ENCODE measurements at regions of chr9 and their contacts with region 1.

Region 1: GRCh38 chr9:131253891-131254491 is 22.3 kb downstream of the FAM78A start:
- DNase-seq: no peak
- ATAC-seq: no peak
- H3K4me3 Mint-ChIP-seq: peak overlapping the region; percentile 16
- H3K27ac Mint-ChIP-seq: peak overlapping the region; percentile 99
- H3K4me1 Mint-ChIP-seq: peaks cover 47% of the 10 kb centered on the region
- H3K27me3 Mint-ChIP-seq: no peaks in the 10 kb centered on the region

Region 2: GRCh38 chr9:131237931-131238401 is 16.0 kb before region 1 on chr9:
- POLR2A ChIA-PET with region 1: interaction called, 79 read pairs
- DNase-seq: peak; percentile 81
- ATAC-seq: peak; percentile 97
- H3K4me3 Mint-ChIP-seq: peak overlapping the region; percentile 79
- H3K27ac Mint-ChIP-seq: peak overlapping the region; percentile 98
- H3K4me1 Mint-ChIP-seq: peaks cover 38% of the 10 kb centered on the region
- H3K27me3 Mint-ChIP-seq: no peaks in the 10 kb centered on the region

Region 3: DNA sequence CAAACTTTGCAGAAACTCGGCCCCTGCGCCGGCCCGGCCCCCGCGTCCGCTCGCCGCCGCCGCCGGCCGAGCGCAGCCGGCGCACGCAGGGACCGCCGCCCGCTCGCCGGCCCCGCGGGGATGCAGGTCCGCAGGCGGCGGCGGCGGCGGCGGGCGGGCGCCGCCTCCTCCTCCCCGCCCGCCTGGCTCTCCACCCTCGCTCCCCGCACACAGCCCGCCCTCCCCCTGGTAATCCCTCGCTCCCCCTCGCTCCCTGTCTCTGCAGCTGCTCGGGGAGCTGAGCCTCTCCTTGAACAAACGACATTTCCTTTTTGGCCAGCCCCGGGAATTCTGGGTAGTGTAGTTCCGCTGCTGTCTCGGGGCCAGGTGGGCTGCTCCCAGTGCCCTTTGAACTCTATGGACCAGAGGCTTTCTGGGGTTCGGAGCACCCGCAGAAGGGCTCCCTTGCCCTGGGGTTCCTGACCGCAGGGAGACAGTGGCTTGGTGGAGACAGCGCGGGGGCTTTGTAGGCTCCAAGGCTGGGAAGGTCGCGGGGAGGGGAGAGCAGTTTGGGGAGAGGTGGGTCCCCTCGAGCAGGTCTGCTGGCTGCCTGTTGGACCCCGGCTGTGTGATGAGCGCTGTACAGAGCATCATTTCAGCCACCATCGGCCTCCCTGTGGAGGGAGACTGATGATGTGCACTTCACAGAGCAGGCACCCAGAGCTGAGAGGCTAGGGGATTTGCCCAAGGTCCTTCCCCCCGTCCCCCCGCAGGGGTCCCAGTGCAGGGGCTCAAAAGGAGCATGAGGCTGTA is 24.1 kb after region 1 on chr9:
- POLR2A ChIA-PET with region 1: interaction called, 594 read pairs
- DNase-seq: peak; percentile 71
- ATAC-seq: peak; percentile 44
- H3K4me3 Mint-ChIP-seq: peak overlapping the region; percentile 83
- H3K27ac Mint-ChIP-seq: peak overlapping the region; percentile 93
- H3K4me1 Mint-ChIP-seq: peaks cover 23% of the 10 kb centered on the region
- H3K27me3 Mint-ChIP-seq: peaks cover 18% of the 10 kb centered on the region

Region 4: GRCh38 chr9:131335368-131335755 is 81.4 kb after region 1 on chr9:
- POLR2A ChIA-PET with region 1: interaction called, 11 read pairs
- DNase-seq: no peak
- ATAC-seq: no peak
- H3K4me3 Mint-ChIP-seq: no peak overlapping the region
- H3K27ac Mint-ChIP-seq: no peak overlapping the region
- H3K4me1 Mint-ChIP-seq: peaks cover 4% of the 10 kb centered on the region
- H3K27me3 Mint-ChIP-seq: peaks cover 8% of the 10 kb centered on the region